Head of caudate nucleus (tissue), 42 donors: ENCODE measurements at regions of chr18 and their contacts with region 1.

Region 1: GRCh38 chr18:28176933-28177827 is at the start of gene CDH2:
- DNase-seq: peak; percentile 59 to 91 (median 79)

Region 2: DNA sequence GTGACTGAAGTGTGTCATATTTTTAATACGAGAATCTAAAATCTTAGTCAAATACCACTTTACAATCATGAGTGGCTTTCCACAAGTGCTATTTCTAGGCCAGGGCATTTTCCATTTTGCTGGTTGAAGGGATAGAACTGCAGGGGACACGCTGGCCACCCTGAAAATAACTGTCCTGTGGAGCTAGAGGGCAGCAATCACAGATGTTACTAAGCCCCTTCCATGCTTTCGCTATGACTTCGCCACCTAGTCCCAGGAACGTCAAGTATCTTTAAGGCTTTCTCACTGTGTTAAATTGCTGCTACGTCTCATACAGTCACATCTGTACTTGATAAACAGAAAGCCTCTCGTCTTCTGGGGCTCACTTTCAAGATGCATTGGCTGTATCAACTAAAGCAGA is 172.0 kb before region 1 on chr18:
- intact Hi-C with region 1: loop called (anchors 5 kb)
- DNase-seq: peak in 16 of 42 donors; percentile 10 to 65 (median 28)

Region 3: GRCh38 chr18:28086670-28087552 is 90.3 kb before region 1 on chr18:
- intact Hi-C with region 1: loop called (anchors 10 kb)
- DNase-seq: peak in 20 of 42 donors; percentile 26 to 76 (median 42)